Stomach (tissue), 19 donors: ENCODE measurements at regions of chr11 and their contacts with region 1.

Region 1: GRCh38 chr11:46238967-46239800 is 38.3 kb upstream of the CREB3L1 start:
- DNase-seq: peak; percentile 85 to 96
- H3K4me3 ChIP-seq: peak overlapping the region; percentile 36 to 61 (median 57)
- H3K27ac ChIP-seq: peak overlapping the region; percentile 44 to 89 (median 73)
- H3K4me1 ChIP-seq: peaks cover 30 to 45% (median 44%) of the 10 kb centered on the region in 4 donors
- H3K27me3 ChIP-seq: peaks cover 0 to 16% (median 0%) of the 10 kb centered on the region in 3 donors
- CTCF ChIP-seq: peak in 6 of 7 experiments; percentile 88 to 99 (median 98)
- EP300 ChIP-seq: no peak
- POLR2A ChIP-seq: no peak

Region 2: DNA sequence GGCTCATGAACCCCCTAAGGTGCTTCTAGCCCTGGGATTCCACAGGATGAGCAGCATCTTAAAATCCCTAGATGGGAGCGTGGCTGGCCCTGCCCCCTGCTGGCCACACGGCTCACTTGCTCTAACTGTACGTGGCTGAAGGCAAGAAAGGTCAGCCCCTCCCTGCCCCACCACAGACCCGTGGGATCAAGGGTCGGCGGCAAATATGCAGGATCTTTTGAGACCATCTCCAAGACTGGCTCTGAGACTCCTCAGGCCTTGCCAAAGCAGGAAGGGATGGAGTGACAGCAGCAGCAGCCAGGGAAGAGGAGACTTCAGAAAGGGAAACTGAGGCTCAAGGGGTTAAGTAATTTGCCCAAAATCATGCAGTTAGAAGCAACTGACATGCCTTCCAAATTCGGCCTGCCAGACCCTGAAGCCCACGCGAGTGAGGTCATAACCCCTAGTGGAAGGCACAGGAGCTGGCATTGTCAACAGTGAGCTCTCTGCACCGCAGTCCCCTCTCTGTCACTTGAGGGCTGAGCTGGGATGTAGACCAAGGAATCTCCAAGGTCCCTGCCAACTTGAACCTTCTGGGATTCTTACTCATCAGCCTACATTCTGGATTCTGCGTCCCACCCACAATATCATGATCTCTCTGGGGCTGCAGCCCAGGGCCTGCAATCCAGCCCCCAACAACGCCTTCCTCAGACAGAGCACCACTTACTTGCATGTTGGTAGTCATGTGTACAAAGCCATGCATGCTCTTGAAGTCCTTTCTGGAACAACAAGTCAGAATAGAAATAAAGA is 69.6 kb after region 1 on chr11:
- intact Hi-C with region 1: loop called (anchors 5 kb)
- DNase-seq: peak; percentile 79 to 88
- H3K4me3 ChIP-seq: no peak overlapping the region
- H3K27ac ChIP-seq: peak overlapping the region in 1 of 5 donors; percentile 18
- H3K4me1 ChIP-seq: peaks cover 0 to 8% (median 6%) of the 10 kb centered on the region in 4 donors
- H3K27me3 ChIP-seq: no peaks in the 10 kb centered on the region
- CTCF ChIP-seq: peak in 5 of 7 experiments; percentile 65 to 85 (median 81)
- EP300 ChIP-seq: no peak
- POLR2A ChIP-seq: no peak

Region 3: DNA sequence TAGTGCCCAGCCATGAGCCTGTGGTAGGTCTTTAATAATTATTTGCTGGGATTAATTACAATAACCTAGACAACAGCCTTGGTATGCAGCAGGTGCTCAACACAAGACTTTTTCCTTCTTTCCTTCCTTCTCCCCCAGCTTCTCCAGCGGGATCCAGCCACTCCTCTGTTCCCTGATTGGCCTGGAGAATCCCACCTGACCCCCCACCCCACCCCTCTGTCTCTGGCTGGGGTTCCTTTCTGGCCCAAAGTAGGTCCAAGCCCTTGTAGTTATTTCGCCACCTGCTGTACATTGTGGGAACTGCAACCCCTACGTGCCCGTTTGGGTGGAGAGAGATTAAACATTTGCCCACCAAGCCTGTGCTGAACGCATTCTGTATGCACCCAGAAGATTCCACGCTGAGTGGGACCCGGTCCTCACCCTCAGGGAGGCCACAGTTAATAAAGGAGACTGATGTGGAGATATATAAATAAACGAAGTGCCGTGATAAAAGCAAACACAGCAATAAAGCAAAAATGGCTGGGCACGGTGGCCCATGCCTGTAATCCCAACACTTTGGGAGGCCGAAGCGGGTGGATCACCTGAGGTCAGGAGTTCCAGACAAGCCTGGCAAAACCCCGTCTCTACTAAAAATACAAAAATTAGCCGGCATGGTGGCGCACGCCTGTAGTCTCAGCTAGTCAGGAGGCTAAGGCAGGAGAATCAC is 76.0 kb after region 1 on chr11:
- intact Hi-C with region 1: loop called (anchors 5 kb)
- DNase-seq: peak; percentile 78 to 86
- H3K4me3 ChIP-seq: no peak overlapping the region
- H3K27ac ChIP-seq: peak overlapping the region; percentile 16 to 60 (median 51)
- H3K4me1 ChIP-seq: peaks cover 12 to 28% (median 15%) of the 10 kb centered on the region in 4 donors
- H3K27me3 ChIP-seq: no peaks in the 10 kb centered on the region
- CTCF ChIP-seq: peak in 5 of 7 experiments; percentile 85 to 97 (median 94)
- EP300 ChIP-seq: no peak
- POLR2A ChIP-seq: no peak